Panc1 (cell line): ENCODE measurements at regions of chr4 and their contacts with region 1.

Region 1: DNA sequence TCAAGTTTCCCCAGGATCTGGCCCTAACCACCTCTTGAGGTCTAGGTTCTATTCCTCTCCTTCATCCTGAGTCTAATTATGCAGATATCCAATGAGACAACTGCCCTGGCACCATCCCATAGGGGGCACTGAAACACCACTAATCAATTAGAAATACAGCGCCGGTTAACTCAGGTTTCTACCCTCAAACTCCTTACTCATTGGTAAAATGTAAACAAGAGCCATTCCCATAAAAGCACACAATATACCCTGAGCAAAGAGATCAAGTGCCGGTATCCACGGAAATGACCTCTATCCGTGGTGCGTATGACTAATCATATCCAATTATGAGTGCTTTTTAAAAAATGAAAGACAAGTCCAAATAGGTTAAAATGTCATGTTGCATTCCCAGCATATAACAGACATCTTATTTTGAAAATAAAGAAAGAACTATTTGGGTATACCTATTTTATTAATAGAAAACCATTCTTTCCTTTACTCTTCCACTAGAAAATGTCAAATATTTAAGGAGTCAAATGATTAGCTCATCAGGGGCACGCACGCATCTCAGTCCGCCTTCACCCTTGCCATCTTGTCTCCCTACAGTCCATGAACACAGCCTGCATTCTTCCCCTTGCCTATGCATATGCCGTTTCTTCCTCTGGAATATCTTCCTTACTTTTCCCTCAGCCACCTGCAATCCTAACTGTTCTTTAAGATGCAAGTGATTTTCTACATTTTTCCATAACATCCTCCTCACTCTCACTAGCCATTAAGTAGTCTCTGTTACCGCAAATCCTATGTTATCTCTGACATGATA is 141.1 kb downstream of the MAML3 start:
- DNase-seq: peak; percentile 82
- ATAC-seq: peak; percentile 96
- H3K4me3 ChIP-seq: peak overlapping the region in 1 of 2 experiments; percentile 24; a peak in 1 of 4 replicates
- H3K27ac ChIP-seq: peak overlapping the region; percentile 63
- H3K4me1 ChIP-seq: peaks cover 18% of the 10 kb centered on the region
- H3K27me3 ChIP-seq: no peaks in the 10 kb centered on the region
- CTCF ChIP-seq: peak; percentile 72

Region 2: DNA sequence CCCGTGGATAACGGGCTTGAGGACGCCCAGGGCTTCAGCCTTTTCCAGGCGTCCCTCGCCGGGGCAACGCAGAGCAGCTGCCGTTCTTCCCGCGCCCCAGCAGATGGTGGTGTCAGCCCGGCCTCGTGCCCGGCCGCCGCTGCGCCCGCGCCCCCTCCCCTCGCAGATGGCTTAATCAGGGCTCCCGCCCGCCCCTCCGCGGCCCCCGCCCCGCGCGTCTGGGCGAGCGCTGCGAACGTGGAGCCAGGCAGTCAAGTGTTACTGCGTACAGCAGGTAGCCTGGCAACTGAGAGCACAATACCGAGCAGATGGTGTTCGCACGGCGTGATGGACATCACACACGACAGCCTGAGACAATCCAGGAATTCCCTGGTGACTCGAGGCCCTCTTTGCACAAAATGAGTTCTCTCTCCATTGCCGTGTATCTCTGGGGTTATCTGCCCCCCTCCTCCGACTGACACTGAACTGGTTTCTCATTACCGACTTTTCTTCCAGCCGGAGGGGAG is 278.0 kb before region 1 on chr4:
- CTCF ChIA-PET with region 1: no interaction called
- POLR2A ChIA-PET with region 1: no interaction called
- in situ Hi-C with region 1: no loop called
- intact Hi-C with region 1: loop called (anchors 10 kb)
- DNase-seq: no peak
- ATAC-seq: peak; percentile 97
- H3K4me3 ChIP-seq: peak overlapping the region; percentile 31 to 48
- H3K27ac ChIP-seq: peak overlapping the region; percentile 69
- H3K4me1 ChIP-seq: peaks cover 3% of the 10 kb centered on the region
- H3K27me3 ChIP-seq: no peaks in the 10 kb centered on the region
- CTCF ChIP-seq: peak; percentile 83

Region 3: GRCh38 chr4:139988863-139989733 is 23.8 kb before region 1 on chr4:
- CTCF ChIA-PET with region 1: no interaction called
- POLR2A ChIA-PET with region 1: no interaction called
- in situ Hi-C with region 1: no loop called
- intact Hi-C with region 1: no loop called
- DNase-seq: peak; percentile 73
- ATAC-seq: peak; percentile 97
- H3K4me3 ChIP-seq: no peak overlapping the region
- H3K27ac ChIP-seq: 0 out of 2 replicates have a peak overlapping the region, but pooled peaks have one; percentile 12
- H3K4me1 ChIP-seq: peaks cover 12% of the 10 kb centered on the region
- H3K27me3 ChIP-seq: no peaks in the 10 kb centered on the region
- CTCF ChIP-seq: no peak

Region 4: DNA sequence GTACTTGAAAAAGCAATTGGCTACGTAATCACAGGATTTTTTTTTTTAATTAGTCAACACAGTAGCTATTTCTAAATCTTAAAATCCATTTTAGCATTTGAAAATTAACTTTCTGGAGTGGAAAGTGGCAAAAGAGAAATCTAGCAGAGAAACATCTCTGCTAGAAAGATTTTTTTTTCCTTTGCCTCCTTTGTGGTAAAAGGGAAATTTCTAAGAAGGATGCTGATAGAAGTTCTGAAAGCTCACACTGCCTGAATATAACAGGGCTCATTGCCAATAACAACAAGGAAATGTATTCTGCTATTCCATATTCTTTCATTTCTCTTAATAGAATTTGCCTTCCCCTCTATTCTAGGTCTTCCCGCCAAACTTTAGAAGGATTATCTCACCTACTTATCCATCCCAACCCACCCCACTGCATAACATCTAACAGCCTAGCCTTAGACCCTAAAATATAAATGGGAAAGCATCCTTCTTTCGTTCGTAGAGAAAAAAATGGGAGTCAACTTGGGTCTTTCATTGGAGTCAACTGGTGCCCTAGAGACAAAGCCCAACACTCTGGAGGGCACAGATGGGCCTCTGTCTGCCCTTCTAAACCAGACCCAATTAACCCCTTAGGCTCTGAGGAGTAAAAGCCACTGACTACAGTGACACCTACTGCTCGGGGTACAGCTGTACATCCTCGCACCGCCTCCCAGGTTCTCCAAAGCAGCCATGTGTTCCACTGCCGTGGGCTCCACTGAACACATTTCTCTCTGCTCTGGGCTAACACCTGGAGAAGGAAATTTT is 37.2 kb after region 1 on chr4:
- CTCF ChIA-PET with region 1: interaction called, 7 read pairs
- POLR2A ChIA-PET with region 1: no interaction called
- in situ Hi-C with region 1: no loop called
- intact Hi-C with region 1: loop called (anchors 2 kb)
- DNase-seq: no peak
- ATAC-seq: peak; percentile 81
- H3K4me3 ChIP-seq: peak overlapping the region in 1 of 2 experiments; percentile 59; a peak in 3 of 4 replicates
- H3K27ac ChIP-seq: peak overlapping the region; percentile 82
- H3K4me1 ChIP-seq: peaks cover 46% of the 10 kb centered on the region
- H3K27me3 ChIP-seq: no peaks in the 10 kb centered on the region
- CTCF ChIP-seq: peak; percentile 80

Region 5: DNA sequence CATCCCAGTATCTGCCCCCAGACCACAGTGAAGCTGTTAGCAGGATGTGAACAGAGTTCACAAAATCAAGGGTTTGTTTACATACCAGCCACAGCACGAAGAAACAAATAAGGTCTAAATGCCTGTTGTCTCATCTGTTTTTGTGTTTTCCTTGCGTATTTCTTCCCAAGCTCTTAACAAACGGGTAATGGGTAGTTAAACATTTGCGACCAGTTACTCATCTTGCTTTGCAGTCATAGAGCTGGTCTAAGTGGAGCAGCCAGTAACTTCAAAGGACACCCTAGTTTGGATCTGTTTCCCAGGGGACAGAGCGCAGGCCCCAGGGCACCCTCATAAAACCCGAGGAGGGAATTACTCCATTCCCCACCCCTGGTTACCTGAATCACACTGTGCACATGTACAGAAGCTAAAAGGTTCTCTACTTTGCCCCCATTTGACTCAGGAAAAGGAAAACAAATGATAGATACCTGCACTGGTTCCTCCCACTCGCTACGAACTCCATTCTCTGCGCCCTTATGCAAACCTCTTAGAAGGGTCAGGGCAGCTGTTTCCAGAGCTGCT is 72.3 kb after region 1 on chr4:
- CTCF ChIA-PET with region 1: interaction called, 4 read pairs
- POLR2A ChIA-PET with region 1: no interaction called
- in situ Hi-C with region 1: no loop called
- intact Hi-C with region 1: loop called (anchors 10 kb)
- DNase-seq: no peak
- ATAC-seq: peak; percentile 85
- H3K4me3 ChIP-seq: peak overlapping the region; percentile 6 to 40; a peak in 3 of 4 replicates
- H3K27ac ChIP-seq: peak overlapping the region; percentile 96
- H3K4me1 ChIP-seq: peaks cover 87% of the 10 kb centered on the region
- H3K27me3 ChIP-seq: no peaks in the 10 kb centered on the region
- CTCF ChIP-seq: no peak

Region 6: GRCh38 chr4:140252742-140253555 is 240.1 kb after region 1 on chr4:
- CTCF ChIA-PET with region 1: interaction called, 4 read pairs
- POLR2A ChIA-PET with region 1: no interaction called
- in situ Hi-C with region 1: no loop called
- intact Hi-C with region 1: loop called (anchors 2 kb)
- DNase-seq: no peak
- ATAC-seq: peak; percentile 87
- H3K4me3 ChIP-seq: peak overlapping the region; percentile 46 to 55
- H3K27ac ChIP-seq: peak overlapping the region; percentile 71
- H3K4me1 ChIP-seq: peaks cover 16% of the 10 kb centered on the region
- H3K27me3 ChIP-seq: no peaks in the 10 kb centered on the region
- CTCF ChIP-seq: peak; percentile 96

Region 7: DNA sequence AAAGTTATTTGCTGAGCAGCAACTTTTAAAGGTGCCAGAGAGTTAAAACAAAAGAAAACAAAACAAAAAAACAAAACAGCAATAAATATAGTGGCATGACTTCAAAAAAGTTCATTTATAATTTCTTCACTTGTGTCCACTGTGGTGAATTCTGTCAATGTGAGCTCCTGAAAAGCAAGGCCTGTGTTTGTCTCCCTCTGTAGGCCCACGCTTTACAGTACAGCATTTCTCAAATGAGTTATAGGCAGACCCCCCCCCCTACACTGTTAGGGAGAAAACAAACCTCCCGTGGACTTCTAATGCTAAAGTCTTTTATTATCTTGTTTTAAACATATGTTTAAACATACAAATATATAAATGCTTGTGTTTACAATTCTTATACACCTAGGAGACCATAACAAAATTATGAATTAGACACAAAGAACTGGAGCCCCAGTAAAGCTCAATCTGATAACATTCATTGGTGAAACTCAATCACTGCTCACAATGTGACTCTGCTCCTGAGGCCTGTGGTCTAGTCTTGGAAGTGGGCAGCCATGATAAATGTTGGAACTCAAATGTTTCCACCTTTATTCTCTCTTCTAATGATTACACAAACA is 313.6 kb after region 1 on chr4:
- CTCF ChIA-PET with region 1: no interaction called
- POLR2A ChIA-PET with region 1: no interaction called
- in situ Hi-C with region 1: no loop called
- intact Hi-C with region 1: loop called (anchors 10 kb)
- DNase-seq: no peak
- ATAC-seq: peak; percentile 74
- H3K4me3 ChIP-seq: no peak overlapping the region
- H3K27ac ChIP-seq: no peak overlapping the region
- H3K4me1 ChIP-seq: no peaks in the 10 kb centered on the region
- H3K27me3 ChIP-seq: no peaks in the 10 kb centered on the region
- CTCF ChIP-seq: peak; percentile 74